Transverse colon (tissue), 4 donors: ENCODE measurements at regions of chr20 and their contacts with region 1.

Region 1: DNA sequence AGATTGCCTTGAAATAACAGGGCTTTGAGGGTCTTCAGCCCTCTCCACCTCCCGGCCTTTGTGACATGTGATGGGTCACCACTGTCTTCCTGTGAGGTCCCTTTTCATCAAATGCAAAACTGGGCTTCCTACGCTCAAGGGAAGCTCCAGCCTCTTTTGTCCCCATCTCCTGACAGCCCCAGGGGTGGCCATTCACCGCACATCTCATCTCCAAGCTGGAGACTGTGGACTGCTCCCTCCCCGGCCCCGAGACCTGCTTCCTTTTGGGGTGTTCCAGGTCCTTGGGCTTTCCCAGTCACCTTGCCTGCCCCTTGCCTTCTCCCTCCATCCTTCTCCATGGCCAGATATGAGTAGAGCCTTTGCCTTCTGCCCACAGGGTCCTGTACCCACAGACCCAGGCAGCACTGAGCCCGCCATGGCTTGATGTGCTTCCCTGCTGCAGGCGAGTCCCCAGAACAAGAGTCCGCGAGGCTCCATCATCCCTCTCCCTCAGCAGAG is 21.8 kb downstream of the PYGB start:
- DNase-seq: peak; percentile 3
- H3K4me3 ChIP-seq: no peak overlapping the region
- H3K27ac ChIP-seq: no peak overlapping the region
- H3K4me1 ChIP-seq: peaks cover 0 to 3% (median 0%) of the 10 kb centered on the region in 4 donors
- H3K27me3 ChIP-seq: no peaks in the 10 kb centered on the region
- CTCF ChIP-seq: no peak
- EP300 ChIP-seq: no peak
- POLR2A ChIP-seq: no peak

Region 2: GRCh38 chr20:25057234-25058050 is 212.2 kb before region 1 on chr20:
- in situ Hi-C with region 1: no loop called
- intact Hi-C with region 1: loop called (anchors 10 kb)
- DNase-seq: peak; percentile 85
- H3K4me3 ChIP-seq: peak overlapping the region; percentile 39 to 85 (median 80)
- H3K27ac ChIP-seq: peak overlapping the region; percentile 92 to 98 (median 96)
- H3K4me1 ChIP-seq: peaks cover 23 to 61% (median 48%) of the 10 kb centered on the region in 4 donors
- H3K27me3 ChIP-seq: no peaks in the 10 kb centered on the region
- CTCF ChIP-seq: peak in 4 of 5 experiments; percentile 2 to 48 (median 12)
- EP300 ChIP-seq: no peak
- POLR2A ChIP-seq: peak; percentile 82

Region 3: DNA sequence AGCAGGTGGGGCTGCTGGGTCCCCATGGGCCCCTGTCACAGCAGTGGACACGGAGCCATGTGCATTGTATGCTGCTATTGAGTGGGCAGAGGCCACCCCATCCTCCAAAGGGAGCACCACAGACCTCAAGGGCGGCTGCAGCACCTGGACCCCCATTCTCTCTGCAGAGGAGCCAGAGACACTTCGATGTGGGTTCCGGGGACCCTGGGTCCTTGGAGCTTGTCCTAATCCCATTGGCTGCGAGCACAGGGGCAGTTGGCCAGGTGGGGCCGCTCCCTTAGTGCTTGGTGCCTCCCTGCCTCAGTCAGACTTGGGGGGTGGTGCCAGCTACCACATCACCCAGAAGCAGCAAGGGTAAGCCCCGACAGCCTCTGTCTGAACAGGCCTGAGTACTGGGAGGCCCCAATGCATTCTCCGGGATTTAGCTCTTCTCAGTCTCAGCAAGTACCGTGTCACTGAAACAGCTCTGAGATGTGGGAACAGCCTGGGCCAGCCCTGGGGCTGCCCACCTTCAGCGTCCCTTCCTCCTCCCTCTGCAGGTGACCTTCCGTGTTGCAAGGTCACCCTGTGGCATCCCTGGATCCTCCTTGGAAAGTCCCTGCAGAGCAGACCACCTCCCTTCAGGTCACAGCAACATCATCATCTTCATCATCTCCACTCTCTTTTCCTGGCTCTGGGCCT is 211.7 kb after region 1 on chr20:
- in situ Hi-C with region 1: no loop called
- intact Hi-C with region 1: no loop called
- DNase-seq: no peak
- H3K4me3 ChIP-seq: no peak overlapping the region
- H3K27ac ChIP-seq: no peak overlapping the region
- H3K4me1 ChIP-seq: no peaks in the 10 kb centered on the region
- H3K27me3 ChIP-seq: no peaks in the 10 kb centered on the region
- CTCF ChIP-seq: no peak
- EP300 ChIP-seq: no peak
- POLR2A ChIP-seq: no peak